ENCODE measurements at regions of chr21 and their contacts with region 1.

Region 1: DNA sequence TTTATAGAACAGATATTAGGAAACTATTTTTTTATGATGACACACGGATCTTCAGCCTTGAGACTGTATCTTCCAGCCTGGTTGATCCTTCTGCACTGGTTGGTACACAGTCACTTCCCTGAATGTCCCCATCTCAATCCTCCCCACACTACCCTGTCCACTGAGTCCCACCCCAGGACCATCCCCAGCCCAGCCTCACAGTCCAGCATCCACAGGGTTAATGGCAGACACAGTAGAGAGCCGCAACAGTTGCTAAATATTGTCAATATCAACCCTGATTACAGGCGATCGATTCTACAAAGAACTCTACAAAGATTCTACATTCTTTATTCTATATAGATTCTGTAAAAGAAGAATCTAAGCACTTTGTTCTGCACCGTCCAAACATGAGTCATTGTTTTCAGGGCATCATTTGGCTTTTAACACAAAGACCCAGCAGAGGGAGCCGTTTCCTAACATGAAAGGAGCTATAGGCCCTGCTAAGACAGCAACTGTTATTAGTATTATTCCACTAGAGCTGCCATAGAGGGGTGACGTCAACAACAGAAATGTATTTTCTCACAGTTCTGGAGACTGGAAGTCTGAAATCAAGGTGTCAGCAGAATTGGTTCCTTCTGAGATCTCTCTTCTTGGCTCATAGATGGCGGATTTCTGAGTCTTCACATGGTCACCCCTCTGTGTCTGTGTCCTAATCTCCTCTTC is 30.1 kb upstream of the IFNAR2 start:
- DNase-seq: no peak

Region 2: GRCh38 chr21:32834916-32835235 is 364.8 kb before region 1 on chr21:
- intact Hi-C with region 1: loop called (anchors 10 kb)
- DNase-seq: no peak

Region 3: GRCh38 chr21:32940079-32941014 is 259.3 kb before region 1 on chr21:
- intact Hi-C with region 1: loop called (anchors 2 kb)
- DNase-seq: no peak

Region 4: DNA sequence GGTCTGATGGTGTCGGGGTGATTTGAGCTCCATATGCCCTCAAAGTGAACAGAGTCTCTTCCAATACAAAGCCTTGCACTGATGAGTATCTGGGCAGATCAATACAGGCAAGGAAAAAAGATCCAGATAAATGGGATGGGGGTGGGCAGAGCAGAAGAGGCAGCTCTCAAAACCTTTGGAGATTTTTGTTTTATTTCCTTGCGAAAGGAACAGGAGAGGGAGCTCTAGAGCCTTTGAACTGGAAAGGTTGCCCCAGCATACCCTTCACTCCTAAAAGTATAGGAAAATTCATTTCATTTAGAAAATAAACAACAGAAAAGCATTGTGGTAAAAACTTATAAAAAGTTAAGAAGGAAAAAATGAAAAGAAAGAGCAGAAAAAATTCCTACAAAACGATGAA is 205.4 kb before region 1 on chr21:
- intact Hi-C with region 1: loop called (anchors 5 kb)
- DNase-seq: no peak

Region 5: GRCh38 chr21:33089398-33090119 is 110.1 kb before region 1 on chr21:
- intact Hi-C with region 1: no loop called
- DNase-seq: no peak

Region 6: DNA sequence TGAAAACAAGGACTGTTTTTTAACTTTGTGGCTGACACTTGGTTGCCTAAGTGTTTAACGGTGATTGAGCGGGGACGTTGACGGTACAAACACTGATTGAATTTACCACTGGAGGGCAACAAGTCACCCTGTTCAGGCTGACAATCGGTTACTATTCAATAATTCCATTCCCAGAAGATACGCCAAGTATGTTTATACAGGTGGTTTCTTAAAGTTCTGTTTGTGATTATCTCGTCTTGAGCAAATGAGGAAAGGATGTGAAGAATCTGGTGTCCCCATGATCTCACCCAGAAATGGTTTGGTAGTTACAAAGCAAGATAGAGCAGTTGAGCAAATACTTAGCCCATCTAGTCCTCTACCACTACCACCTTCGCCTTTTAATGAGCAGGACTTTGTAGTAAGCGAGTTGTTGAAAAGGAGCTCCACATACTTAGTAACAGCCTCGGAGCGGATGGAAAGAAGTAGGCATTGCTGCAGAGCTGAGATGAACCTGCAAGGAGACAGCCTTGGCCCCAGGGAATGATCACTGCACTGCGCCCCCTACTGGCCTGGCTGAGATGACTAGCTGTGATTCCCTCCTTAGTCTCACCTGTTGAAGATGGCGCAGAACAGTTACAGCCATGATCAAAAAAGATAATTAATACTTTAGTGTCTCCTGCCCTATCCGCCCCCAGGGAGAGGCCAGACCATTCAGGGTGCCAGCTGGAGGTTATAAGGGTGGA is 161.4 kb after region 1 on chr21:
- intact Hi-C with region 1: loop called (anchors 5 kb)
- DNase-seq: peak; percentile 90

Region 7: GRCh38 chr21:33374450-33375096 is 174.9 kb after region 1 on chr21:
- intact Hi-C with region 1: loop called (anchors 2 kb)
- DNase-seq: no peak

Region 8: GRCh38 chr21:33441489-33442477 is 242.1 kb after region 1 on chr21:
- intact Hi-C with region 1: loop called (anchors 2 kb)
- DNase-seq: no peak